ENCODE measurements at regions of chr6 and their contacts with region 1.

Region 1: DNA sequence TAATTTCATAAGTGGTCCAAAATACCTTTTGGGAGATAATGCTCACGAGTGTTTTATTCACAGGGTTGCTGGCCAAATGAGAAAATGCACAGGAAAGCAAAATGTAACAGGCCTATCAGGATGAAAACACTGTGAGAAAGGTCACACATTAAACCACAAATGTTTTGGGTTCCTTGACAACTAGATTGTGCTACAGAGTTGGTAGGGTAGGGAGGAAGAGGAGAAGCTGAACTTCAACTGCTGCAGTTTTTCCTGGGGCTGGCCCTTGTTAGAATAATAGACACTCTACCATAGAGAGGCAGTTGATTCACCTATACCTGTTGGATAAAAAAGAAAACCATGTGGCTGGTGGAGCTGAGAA is 28.1 kb upstream of the PAQR8 start:
- DNase-seq: peak in 1 of 2 donors; percentile 68
- ATAC-seq: peak; percentile 85 to 97 (median 93)
- H3K4me3 ChIP-seq: no peak overlapping the region
- H3K4me3 Mint-ChIP-seq: peak overlapping the region; percentile 82
- H3K27ac ChIP-seq: peak overlapping the region; percentile 87
- H3K27ac Mint-ChIP-seq: peak overlapping the region; percentile 93 to 96
- H3K4me1 ChIP-seq: peaks cover 30% of the 10 kb centered on the region
- H3K4me1 Mint-ChIP-seq: peaks cover 44 to 58% of the 10 kb centered on the region in 2 donors
- H3K27me3 ChIP-seq: no peaks in the 10 kb centered on the region
- H3K27me3 Mint-ChIP-seq: no peaks in the 10 kb centered on the region
- CTCF ChIP-seq: no peak

Region 2: DNA sequence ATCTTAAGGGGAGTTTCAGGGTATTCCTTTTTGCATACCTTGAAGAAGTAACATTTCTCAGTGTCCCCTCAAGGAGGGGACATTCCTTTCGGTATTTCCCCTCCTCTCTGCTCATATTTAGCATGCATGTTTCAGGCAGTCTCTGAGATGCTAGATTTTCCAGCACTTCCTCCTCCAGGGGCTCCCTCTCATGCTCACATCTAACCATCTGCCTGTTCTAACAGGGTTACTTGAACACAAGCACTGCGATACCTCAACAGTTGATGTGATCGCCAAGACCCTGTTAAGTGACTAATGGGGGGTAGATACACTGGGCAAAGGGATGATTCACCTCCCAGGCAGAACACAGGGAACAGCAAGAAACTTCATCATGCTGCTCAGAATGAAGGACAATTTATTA is 36.4 kb before region 1 on chr6:
- intact Hi-C with region 1: loop called (anchors 5 kb)
- DNase-seq: peak in 1 of 2 donors; percentile 37
- ATAC-seq: no peak
- H3K4me3 ChIP-seq: no peak overlapping the region
- H3K4me3 Mint-ChIP-seq: no peak overlapping the region
- H3K27ac ChIP-seq: no peak overlapping the region
- H3K27ac Mint-ChIP-seq: peak overlapping the region; percentile 82 to 93
- H3K4me1 ChIP-seq: peaks cover 13% of the 10 kb centered on the region
- H3K4me1 Mint-ChIP-seq: peaks cover 7 to 13% of the 10 kb centered on the region in 2 donors
- H3K27me3 ChIP-seq: no peaks in the 10 kb centered on the region
- H3K27me3 Mint-ChIP-seq: no peaks in the 10 kb centered on the region
- CTCF ChIP-seq: no peak

Region 3: GRCh38 chr6:52399511-52400312 is 65.9 kb after region 1 on chr6:
- intact Hi-C with region 1: loop called (anchors 2 kb)
- DNase-seq: peak in 1 of 2 donors; percentile 77
- ATAC-seq: peak in 2 of 3 donors; percentile 65 to 75
- H3K4me3 ChIP-seq: no peak overlapping the region
- H3K4me3 Mint-ChIP-seq: peak overlapping the region; percentile 61
- H3K27ac ChIP-seq: no peak overlapping the region
- H3K27ac Mint-ChIP-seq: peak overlapping the region; percentile 21 to 84
- H3K4me1 ChIP-seq: peaks cover 25% of the 10 kb centered on the region
- H3K4me1 Mint-ChIP-seq: peaks cover 38 to 43% of the 10 kb centered on the region in 2 donors
- H3K27me3 ChIP-seq: no peaks in the 10 kb centered on the region
- H3K27me3 Mint-ChIP-seq: no peaks in the 10 kb centered on the region
- CTCF ChIP-seq: peak; percentile 80

Measured in natural killer cell (primary cell).